B cell (primary cell): ENCODE measurements at regions of chr7 and their contacts with region 1.

Region 1: GRCh38 chr7:12322284-12322902 is 81.3 kb downstream of the VWDE start:
- DNase-seq: peak; percentile 49
- ATAC-seq: no peak
- H3K4me3 ChIP-seq: no peak overlapping the region
- H3K4me3 Mint-ChIP-seq: no peak overlapping the region
- H3K27ac ChIP-seq: no peak overlapping the region
- H3K27ac Mint-ChIP-seq: no peak overlapping the region
- H3K4me1 ChIP-seq: no peaks in the 10 kb centered on the region
- H3K4me1 Mint-ChIP-seq: no peaks in the 10 kb centered on the region
- H3K27me3 ChIP-seq: no peaks in the 10 kb centered on the region
- H3K27me3 Mint-ChIP-seq: peaks cover 2% of the 10 kb centered on the region
- CTCF ChIP-seq: peak; percentile 95

Region 2: GRCh38 chr7:11427686-11428273 is 894.6 kb before region 1 on chr7:
- CTCF ChIA-PET with region 1: interaction called, 3 read pairs
- POLR2A ChIA-PET with region 1: no interaction called
- intact Hi-C with region 1: loop called (anchors 1 kb)
- DNase-seq: peak; percentile 34
- ATAC-seq: no peak
- H3K4me3 ChIP-seq: no peak overlapping the region
- H3K4me3 Mint-ChIP-seq: no peak overlapping the region
- H3K27ac ChIP-seq: no peak overlapping the region
- H3K27ac Mint-ChIP-seq: no peak overlapping the region
- H3K4me1 ChIP-seq: no peaks in the 10 kb centered on the region
- H3K4me1 Mint-ChIP-seq: no peaks in the 10 kb centered on the region
- H3K27me3 ChIP-seq: no peaks in the 10 kb centered on the region
- H3K27me3 Mint-ChIP-seq: no peaks in the 10 kb centered on the region
- CTCF ChIP-seq: peak; percentile 69

Region 3: GRCh38 chr7:11831736-11832495 is 490.5 kb before region 1 on chr7 and contains the start of gene THSD7A:
- CTCF ChIA-PET with region 1: interaction called, 4 read pairs
- POLR2A ChIA-PET with region 1: no interaction called
- intact Hi-C with region 1: loop called (anchors 2 kb)
- DNase-seq: peak; percentile 6
- ATAC-seq: no peak
- H3K4me3 ChIP-seq: peak within 1 kb of the TSS in 3 of 5 experiments; percentile 3 to 61 (median 29)
- H3K4me3 Mint-ChIP-seq: no peak within 1 kb of the TSS
- H3K27ac ChIP-seq: no peak within 1 kb of the TSS
- H3K27ac Mint-ChIP-seq: no peak within 1 kb of the TSS
- H3K4me1 ChIP-seq: peaks cover 11 to 12% of the 10 kb centered on the region in 2 donors
- H3K4me1 Mint-ChIP-seq: peaks cover 8% of the 10 kb centered on the region
- H3K27me3 ChIP-seq: peaks cover 0 to 19% (median 11%) of the 10 kb centered on the region in 4 experiments
- H3K27me3 Mint-ChIP-seq: peaks cover 37% of the 10 kb centered on the region
- CTCF ChIP-seq: no peak
- total RNA-seq, gene THSD7A: not detected in 2 replicates

Region 4: GRCh38 chr7:12067141-12067831 is 255.1 kb before region 1 on chr7:
- CTCF ChIA-PET with region 1: interaction called, 57 read pairs
- POLR2A ChIA-PET with region 1: no interaction called
- intact Hi-C with region 1: no loop called
- DNase-seq: peak; percentile 65
- ATAC-seq: no peak
- H3K4me3 ChIP-seq: no peak overlapping the region
- H3K4me3 Mint-ChIP-seq: no peak overlapping the region
- H3K27ac ChIP-seq: no peak overlapping the region
- H3K27ac Mint-ChIP-seq: no peak overlapping the region
- H3K4me1 ChIP-seq: no peaks in the 10 kb centered on the region
- H3K4me1 Mint-ChIP-seq: no peaks in the 10 kb centered on the region
- H3K27me3 ChIP-seq: no peaks in the 10 kb centered on the region
- H3K27me3 Mint-ChIP-seq: no peaks in the 10 kb centered on the region
- CTCF ChIP-seq: peak; percentile 73

Region 5: GRCh38 chr7:12211054-12211710 is 111.2 kb before region 1 on chr7 and contains the start of gene TMEM106B:
- CTCF ChIA-PET with region 1: interaction called, 5 read pairs
- POLR2A ChIA-PET with region 1: no interaction called
- intact Hi-C with region 1: loop called (anchors 2 kb)
- DNase-seq: peak; percentile 97
- ATAC-seq: peak; percentile 90
- H3K4me3 ChIP-seq: peak within 1 kb of the TSS; percentile 76 to 100 (median 82)
- H3K4me3 Mint-ChIP-seq: peak within 1 kb of the TSS; percentile 94
- H3K27ac ChIP-seq: peak within 1 kb of the TSS; percentile 87 to 90
- H3K27ac Mint-ChIP-seq: peak within 1 kb of the TSS; percentile 95
- H3K4me1 ChIP-seq: peaks cover 12 to 13% of the 10 kb centered on the region in 2 donors
- H3K4me1 Mint-ChIP-seq: peaks cover 26% of the 10 kb centered on the region
- H3K27me3 ChIP-seq: peaks cover 0 to 4% (median 2%) of the 10 kb centered on the region in 4 experiments
- H3K27me3 Mint-ChIP-seq: peaks cover 19% of the 10 kb centered on the region
- CTCF ChIP-seq: no peak
- total RNA-seq, gene TMEM106B: 28.3 and 30.2 TPM in 2 replicates

Region 6: GRCh38 chr7:12490117-12490688 is 167.8 kb after region 1 on chr7:
- CTCF ChIA-PET with region 1: interaction called, 7 read pairs
- POLR2A ChIA-PET with region 1: no interaction called
- intact Hi-C with region 1: loop called (anchors 5 kb)
- DNase-seq: peak; percentile 19
- ATAC-seq: peak; percentile 24
- H3K4me3 ChIP-seq: no peak overlapping the region
- H3K4me3 Mint-ChIP-seq: no peak overlapping the region
- H3K27ac ChIP-seq: no peak overlapping the region
- H3K27ac Mint-ChIP-seq: no peak overlapping the region
- H3K4me1 ChIP-seq: no peaks in the 10 kb centered on the region
- H3K4me1 Mint-ChIP-seq: no peaks in the 10 kb centered on the region
- H3K27me3 ChIP-seq: no peaks in the 10 kb centered on the region
- H3K27me3 Mint-ChIP-seq: no peaks in the 10 kb centered on the region
- CTCF ChIP-seq: peak; percentile 64